Psoas muscle (tissue), 8 donors: ENCODE measurements at regions of chr12 and their contacts with region 1.

Region 1: DNA sequence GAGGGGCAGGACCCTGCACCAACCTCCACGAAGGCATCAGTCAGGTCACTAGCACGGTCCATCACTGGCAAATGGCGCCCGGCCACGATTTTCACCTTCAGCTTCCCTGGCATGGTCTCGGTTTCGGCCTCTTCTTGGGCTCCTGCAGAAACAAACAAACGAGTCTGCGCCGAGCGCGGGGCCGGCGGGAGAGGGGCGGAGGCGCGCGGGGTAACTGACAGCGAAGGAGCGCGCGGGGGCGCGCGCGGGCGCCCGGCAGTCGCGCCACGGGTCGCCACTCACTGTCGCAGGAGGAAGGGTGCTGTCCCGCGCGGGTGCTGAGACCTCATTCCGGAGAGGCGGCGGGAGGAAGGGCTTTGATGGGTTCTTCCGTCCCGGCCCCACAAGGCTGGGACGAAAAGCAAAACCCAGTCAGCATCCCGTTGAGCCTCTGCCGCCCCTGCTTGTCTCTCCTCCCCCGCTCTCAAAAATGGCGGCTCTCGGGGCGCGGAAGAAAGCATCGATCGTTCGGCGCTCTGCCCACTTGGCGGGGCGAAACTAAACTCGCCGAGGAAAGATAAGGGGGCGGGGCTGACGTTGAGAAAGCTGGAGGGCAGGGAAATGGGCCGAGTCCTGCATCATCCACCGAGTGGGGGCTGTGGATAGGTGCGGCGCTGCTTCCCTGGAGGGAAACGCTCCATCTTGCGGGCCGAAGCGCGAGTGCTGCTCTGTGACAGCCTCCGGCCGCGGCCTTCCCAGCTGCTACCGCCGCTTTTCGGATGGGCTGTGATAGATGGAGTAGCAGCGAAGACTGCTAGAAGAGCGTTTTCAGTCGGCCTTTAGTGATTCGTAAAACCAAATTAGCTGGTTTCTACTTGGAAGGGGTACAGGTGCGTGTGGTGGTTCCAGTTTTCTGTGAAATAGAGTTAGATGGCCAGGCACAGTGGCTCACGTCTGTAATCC is at the start of gene C2CD5:
- DNase-seq: peak; percentile 98 to 99
- ATAC-seq: peak; percentile 96 to 97 (median 96)
- H3K4me3 ChIP-seq: peak within 1 kb of the TSS; percentile 93
- H3K27ac ChIP-seq: peak within 1 kb of the TSS; percentile 86
- H3K4me1 ChIP-seq: peaks cover 9% of the 10 kb centered on the region
- H3K27me3 ChIP-seq: no peaks in the 10 kb centered on the region
- CTCF ChIP-seq: peak; percentile 26
- total RNA-seq, gene C2CD5: 5.9 to 13.4 (median 6.9) TPM

Region 2: DNA sequence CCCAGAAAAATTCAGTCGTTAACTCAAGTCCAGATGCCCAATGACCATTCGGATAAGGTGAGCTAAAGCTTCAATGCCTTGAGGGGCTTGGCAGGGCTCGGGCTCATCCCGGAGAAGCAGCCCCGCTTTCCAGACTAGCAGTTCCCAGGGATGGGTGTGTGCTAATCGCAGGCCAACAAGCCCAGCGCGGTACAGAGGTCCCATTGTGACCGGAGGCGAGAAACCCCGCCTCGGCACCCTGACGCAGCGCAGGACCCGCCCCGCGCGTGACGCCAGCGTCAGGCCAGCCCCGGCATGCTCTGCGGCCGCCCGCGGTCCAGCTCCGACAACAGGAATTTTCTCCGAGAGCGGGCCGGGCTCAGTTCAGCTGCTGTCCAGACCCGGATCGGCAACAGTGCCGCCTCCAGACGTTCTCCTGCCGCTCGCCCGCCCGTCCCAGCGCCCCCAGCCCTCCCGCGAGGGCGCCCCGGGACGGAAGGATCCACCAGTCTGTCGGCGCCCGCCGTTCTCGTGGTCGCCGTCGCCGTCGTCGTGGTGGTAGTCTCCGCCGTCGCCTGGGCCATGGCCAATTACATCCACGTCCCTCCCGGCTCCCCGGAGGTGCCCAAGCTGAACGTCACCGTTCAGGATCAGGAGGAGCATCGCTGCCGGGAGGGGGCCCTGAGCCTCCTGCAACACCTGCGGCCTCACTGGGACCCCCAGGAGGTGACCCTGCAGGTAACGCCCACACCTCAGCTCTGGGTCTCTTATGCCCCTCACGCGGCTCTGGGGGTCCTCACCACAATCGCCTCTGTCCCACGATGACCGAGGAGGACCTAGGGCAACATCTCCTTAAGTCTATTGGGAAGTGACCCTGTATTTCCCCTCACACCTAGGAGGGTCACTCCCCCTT is 80.8 kb after region 1 on chr12 and contains the start of gene ETNK1:
- intact Hi-C with region 1: loop called (anchors 1 to 5 kb)
- DNase-seq: peak; percentile 94 to 96
- ATAC-seq: peak; percentile 99 to 100 (median 100)
- H3K4me3 ChIP-seq: peak within 1 kb of the TSS; percentile 93
- H3K27ac ChIP-seq: peak within 1 kb of the TSS; percentile 98
- H3K4me1 ChIP-seq: peaks cover 27% of the 10 kb centered on the region
- H3K27me3 ChIP-seq: no peaks in the 10 kb centered on the region
- CTCF ChIP-seq: no peak
- total RNA-seq, gene ETNK1: 8.7 to 13.2 (median 12.7) TPM

Region 3: DNA sequence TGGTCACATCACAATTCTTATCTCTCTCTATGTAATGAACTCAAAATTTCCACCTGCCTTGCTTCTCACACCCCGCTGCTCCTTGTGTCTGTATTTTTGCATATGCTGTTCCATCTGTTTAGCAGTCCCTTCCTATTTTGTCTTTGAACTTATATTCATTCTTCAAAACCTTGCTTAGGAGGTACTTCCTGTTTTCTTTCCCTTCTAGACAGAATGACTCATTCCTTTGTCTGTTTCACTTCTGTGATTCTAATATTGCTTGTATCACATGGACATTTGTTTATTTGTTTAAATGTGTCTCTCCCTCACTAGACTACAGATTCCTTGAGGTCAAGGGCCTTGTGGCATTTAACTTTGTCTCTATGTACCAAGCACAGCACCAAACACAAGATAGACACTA is 504.9 kb after region 1 on chr12:
- intact Hi-C with region 1: no loop called
- DNase-seq: no peak
- ATAC-seq: no peak
- H3K4me3 ChIP-seq: no peak overlapping the region
- H3K27ac ChIP-seq: no peak overlapping the region
- H3K4me1 ChIP-seq: no peaks in the 10 kb centered on the region
- H3K27me3 ChIP-seq: no peaks in the 10 kb centered on the region
- CTCF ChIP-seq: no peak